ENCODE measurements at regions of chr6 and their contacts with region 1.

Region 1: DNA sequence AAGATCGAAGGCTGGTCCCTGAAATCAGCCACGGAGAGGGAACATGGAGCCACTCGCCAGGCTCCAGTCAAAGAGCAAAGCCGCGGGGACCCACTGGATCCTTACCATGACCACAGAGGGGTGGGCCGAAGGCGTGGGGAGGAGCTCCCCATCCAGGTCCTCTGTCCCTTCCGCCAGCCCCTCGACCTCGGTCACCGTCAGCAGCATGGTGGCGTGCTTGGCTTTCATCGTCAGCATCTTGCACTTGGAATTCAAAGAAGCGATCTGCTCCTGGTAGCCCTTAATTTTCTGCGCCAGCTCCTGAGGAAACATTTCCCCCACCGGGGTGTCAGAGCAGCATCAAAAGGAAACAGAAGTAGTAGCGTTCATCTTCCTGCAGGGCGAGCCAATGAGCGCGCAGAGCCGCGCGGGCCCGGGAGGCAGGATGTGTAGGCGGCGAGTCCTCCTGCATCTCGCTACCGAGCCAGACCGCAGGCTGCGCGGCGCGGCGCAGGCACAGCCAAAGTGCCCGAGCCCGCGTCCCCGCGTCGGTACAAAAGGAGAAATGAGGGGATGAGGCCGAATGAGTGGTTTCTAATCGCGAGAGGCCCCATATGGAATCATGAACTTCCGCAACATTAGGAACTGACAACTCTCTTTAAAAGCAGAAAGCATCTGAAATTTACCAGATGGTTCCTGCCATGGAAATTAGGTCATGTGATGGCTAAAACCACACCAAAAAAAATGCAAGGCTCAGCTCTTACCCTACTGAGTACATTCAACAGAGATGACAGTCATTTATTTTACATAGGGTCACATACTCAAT is 335.2 kb downstream of the SYNE1 start:
- DNase-seq: peak; percentile 75 to 94 (median 84)
- ATAC-seq: peak; percentile 96
- H3K4me3 ChIP-seq: peak overlapping the region; percentile 76
- H3K4me3 Mint-ChIP-seq: peak overlapping the region; percentile 99
- H3K27ac ChIP-seq: peak overlapping the region; percentile 79 to 82
- H3K27ac Mint-ChIP-seq: peak overlapping the region; percentile 96
- H3K4me1 ChIP-seq: peaks cover 8% of the 10 kb centered on the region
- H3K4me1 Mint-ChIP-seq: peaks cover 40% of the 10 kb centered on the region
- H3K27me3 ChIP-seq: no peaks in the 10 kb centered on the region
- H3K27me3 Mint-ChIP-seq: no peaks in the 10 kb centered on the region
- CTCF ChIP-seq: peak; percentile 79

Region 2: GRCh38 chr6:152184917-152185574 is 116.9 kb before region 1 on chr6:
- CTCF ChIA-PET with region 1: interaction called, 4 read pairs
- POLR2A ChIA-PET with region 1: interaction called, 31 read pairs
- intact Hi-C with region 1: no loop called
- DNase-seq: peak in 7 of 14 experiments; percentile 4 to 78 (median 42)
- ATAC-seq: peak; percentile 75
- H3K4me3 ChIP-seq: peak overlapping the region; percentile 56
- H3K4me3 Mint-ChIP-seq: peak overlapping the region; percentile 96
- H3K27ac ChIP-seq: peak overlapping the region; percentile 81 to 90
- H3K27ac Mint-ChIP-seq: peak overlapping the region; percentile 97
- H3K4me1 ChIP-seq: peaks cover 26% of the 10 kb centered on the region
- H3K4me1 Mint-ChIP-seq: peaks cover 88% of the 10 kb centered on the region
- H3K27me3 ChIP-seq: no peaks in the 10 kb centered on the region
- H3K27me3 Mint-ChIP-seq: no peaks in the 10 kb centered on the region
- CTCF ChIP-seq: no peak

Region 3: GRCh38 chr6:152232501-152233151 is 69.3 kb before region 1 on chr6:
- CTCF ChIA-PET with region 1: no interaction called
- POLR2A ChIA-PET with region 1: interaction called, 10 read pairs
- intact Hi-C with region 1: no loop called
- DNase-seq: peak in 6 of 14 experiments; percentile 5 to 32 (median 19)
- ATAC-seq: peak; percentile 56
- H3K4me3 ChIP-seq: no peak overlapping the region
- H3K4me3 Mint-ChIP-seq: peak overlapping the region; percentile 78
- H3K27ac ChIP-seq: no peak overlapping the region
- H3K27ac Mint-ChIP-seq: peak overlapping the region; percentile 82
- H3K4me1 ChIP-seq: peaks cover 16% of the 10 kb centered on the region
- H3K4me1 Mint-ChIP-seq: peaks cover 28% of the 10 kb centered on the region
- H3K27me3 ChIP-seq: no peaks in the 10 kb centered on the region
- H3K27me3 Mint-ChIP-seq: no peaks in the 10 kb centered on the region
- CTCF ChIP-seq: no peak

Region 4: GRCh38 chr6:152316024-152316423 is 14.1 kb after region 1 on chr6:
- CTCF ChIA-PET with region 1: interaction called, 13 read pairs
- POLR2A ChIA-PET with region 1: interaction called, 40 read pairs
- intact Hi-C with region 1: no loop called
- DNase-seq: peak in 1 of 14 experiments; percentile 42
- ATAC-seq: no peak
- H3K4me3 ChIP-seq: no peak overlapping the region
- H3K4me3 Mint-ChIP-seq: no peak overlapping the region
- H3K27ac ChIP-seq: no peak overlapping the region
- H3K27ac Mint-ChIP-seq: no peak overlapping the region
- H3K4me1 ChIP-seq: no peaks in the 10 kb centered on the region
- H3K4me1 Mint-ChIP-seq: peaks cover 6% of the 10 kb centered on the region
- H3K27me3 ChIP-seq: no peaks in the 10 kb centered on the region
- H3K27me3 Mint-ChIP-seq: peaks cover 10% of the 10 kb centered on the region
- CTCF ChIP-seq: no peak

Region 5: GRCh38 chr6:152338335-152339125 is 36.6 kb after region 1 on chr6:
- CTCF ChIA-PET with region 1: interaction called, 31 read pairs
- POLR2A ChIA-PET with region 1: interaction called, 33 read pairs
- intact Hi-C with region 1: loop called (anchors 1 to 2 kb)
- DNase-seq: peak; percentile 28 to 79 (median 57)
- ATAC-seq: peak; percentile 82
- H3K4me3 ChIP-seq: no peak overlapping the region
- H3K4me3 Mint-ChIP-seq: no peak overlapping the region
- H3K27ac ChIP-seq: no peak overlapping the region
- H3K27ac Mint-ChIP-seq: no peak overlapping the region
- H3K4me1 ChIP-seq: peaks cover 5% of the 10 kb centered on the region
- H3K4me1 Mint-ChIP-seq: no peaks in the 10 kb centered on the region
- H3K27me3 ChIP-seq: no peaks in the 10 kb centered on the region
- H3K27me3 Mint-ChIP-seq: no peaks in the 10 kb centered on the region
- CTCF ChIP-seq: peak; percentile 95

Region 6: DNA sequence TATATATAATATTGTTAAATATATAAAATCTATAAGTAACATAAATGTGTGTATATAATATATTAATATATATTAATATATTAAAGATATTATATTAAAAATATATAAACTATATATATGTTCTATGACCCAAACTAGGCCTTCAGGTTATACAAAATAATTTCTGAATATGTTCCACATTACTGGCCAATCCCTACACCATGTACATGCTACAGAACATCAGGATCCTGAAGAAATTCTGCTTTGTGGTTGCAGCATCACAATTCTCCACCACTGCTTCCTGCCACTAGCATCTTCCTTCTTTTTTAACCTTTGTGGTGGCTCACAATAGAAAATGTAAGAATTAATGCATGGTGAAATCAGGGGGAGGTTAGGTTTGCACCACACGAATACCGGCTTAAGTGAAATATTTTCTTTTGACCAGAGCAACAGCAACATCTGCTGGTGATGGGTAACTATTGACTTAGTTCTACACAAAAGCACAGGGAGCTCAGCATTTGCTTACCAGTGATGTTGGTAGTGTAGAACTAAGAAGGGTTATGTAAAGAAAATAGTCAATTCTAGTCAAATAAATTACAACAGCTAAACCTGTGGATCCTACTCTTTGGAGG is 54.6 kb after region 1 on chr6:
- CTCF ChIA-PET with region 1: interaction called, 9 read pairs
- POLR2A ChIA-PET with region 1: no interaction called
- intact Hi-C with region 1: loop called in 1 of 2 experiments (anchors 1 kb)
- DNase-seq: peak in 4 of 14 experiments; percentile 14 to 59 (median 47)
- ATAC-seq: peak; percentile 69
- H3K4me3 ChIP-seq: no peak overlapping the region
- H3K4me3 Mint-ChIP-seq: no peak overlapping the region
- H3K27ac ChIP-seq: no peak overlapping the region
- H3K27ac Mint-ChIP-seq: no peak overlapping the region
- H3K4me1 ChIP-seq: no peaks in the 10 kb centered on the region
- H3K4me1 Mint-ChIP-seq: peaks cover 4% of the 10 kb centered on the region
- H3K27me3 ChIP-seq: no peaks in the 10 kb centered on the region
- H3K27me3 Mint-ChIP-seq: no peaks in the 10 kb centered on the region
- CTCF ChIP-seq: peak; percentile 44

Region 7: GRCh38 chr6:152982768-152983636 is 681.0 kb after region 1 on chr6 and contains the start of gene FBXO5:
- CTCF ChIA-PET with region 1: no interaction called
- POLR2A ChIA-PET with region 1: interaction called, 3 read pairs
- intact Hi-C with region 1: loop called in 1 of 2 experiments (anchors 5 kb)
- DNase-seq: peak; percentile 93 to 99 (median 96)
- ATAC-seq: peak; percentile 93
- H3K4me3 ChIP-seq: peak within 1 kb of the TSS; percentile 97
- H3K4me3 Mint-ChIP-seq: peak within 1 kb of the TSS; percentile 99
- H3K27ac ChIP-seq: peak within 1 kb of the TSS; percentile 81 to 93
- H3K27ac Mint-ChIP-seq: peak within 1 kb of the TSS; percentile 98
- H3K4me1 ChIP-seq: peaks cover 34% of the 10 kb centered on the region
- H3K4me1 Mint-ChIP-seq: peaks cover 52% of the 10 kb centered on the region
- H3K27me3 ChIP-seq: no peaks in the 10 kb centered on the region
- H3K27me3 Mint-ChIP-seq: no peaks in the 10 kb centered on the region
- CTCF ChIP-seq: no peak
- total RNA-seq, gene FBXO5: 3.0 to 3.3 TPM

Measured in CD4-positive, alpha-beta T cell (primary cell).